Breast epithelium (tissue), 4 donors: ENCODE measurements at regions of chr9 and their contacts with region 1.

Region 1: GRCh38 chr9:4155221-4156026 is 144.4 kb downstream of the GLIS3 start:
- DNase-seq: no peak
- H3K4me3 ChIP-seq: no peak overlapping the region
- H3K27ac ChIP-seq: no peak overlapping the region
- H3K4me1 ChIP-seq: no peaks in the 10 kb centered on the region
- H3K27me3 ChIP-seq: no peaks in the 10 kb centered on the region
- CTCF ChIP-seq: no peak
- POLR2A ChIP-seq: no peak

Region 2: GRCh38 chr9:3323714-3324113 is 831.7 kb before region 1 on chr9:
- intact Hi-C with region 1: loop called (anchors 5 kb)
- DNase-seq: no peak
- H3K4me3 ChIP-seq: no peak overlapping the region
- H3K27ac ChIP-seq: no peak overlapping the region
- H3K4me1 ChIP-seq: no peaks in the 10 kb centered on the region
- H3K27me3 ChIP-seq: no peaks in the 10 kb centered on the region
- CTCF ChIP-seq: no peak
- POLR2A ChIP-seq: no peak